ENCODE measurements at regions of chr19 and their contacts with region 1.

Region 1: GRCh38 chr19:49676690-49677231 is 310 bp upstream of the PRMT1 start:
- DNase-seq: peak; percentile 100
- H3K4me3 ChIP-seq: peak overlapping the region; percentile 100
- H3K4me3 Mint-ChIP-seq: peak overlapping the region; percentile 78
- H3K27ac Mint-ChIP-seq: peak overlapping the region; percentile 99
- H3K4me1 ChIP-seq: peaks cover 22% of the 10 kb centered on the region
- H3K4me1 Mint-ChIP-seq: peaks cover 19% of the 10 kb centered on the region
- H3K27me3 ChIP-seq: no peaks in the 10 kb centered on the region
- H3K27me3 Mint-ChIP-seq: no peaks in the 10 kb centered on the region
- CTCF ChIP-seq: no peak

Region 2: GRCh38 chr19:49502866-49503581 is 173.7 kb before region 1 on chr19:
- CTCF ChIA-PET with region 1: interaction called, 3 read pairs
- POLR2A ChIA-PET with region 1: no interaction called
- intact Hi-C with region 1: loop called (anchors 1 kb)
- DNase-seq: peak; percentile 69 to 73
- H3K4me3 ChIP-seq: no peak overlapping the region
- H3K4me3 Mint-ChIP-seq: no peak overlapping the region
- H3K27ac Mint-ChIP-seq: no peak overlapping the region
- H3K4me1 ChIP-seq: peaks cover 5% of the 10 kb centered on the region; the same call in 1 of the 2 replicates
- H3K4me1 Mint-ChIP-seq: peaks cover 7% of the 10 kb centered on the region
- H3K27me3 ChIP-seq: no peaks in the 10 kb centered on the region
- H3K27me3 Mint-ChIP-seq: no peaks in the 10 kb centered on the region
- CTCF ChIP-seq: peak; percentile 65 to 76

Region 3: GRCh38 chr19:49580264-49581006 is 96.3 kb before region 1 on chr19 and contains the start of gene NOSIP:
- CTCF ChIA-PET with region 1: interaction called, 3 read pairs
- POLR2A ChIA-PET with region 1: interaction called, 10 read pairs
- intact Hi-C with region 1: no loop called
- DNase-seq: peak; percentile 97
- H3K4me3 ChIP-seq: peak within 1 kb of the TSS; percentile 99
- H3K4me3 Mint-ChIP-seq: peak within 1 kb of the TSS; percentile 95
- H3K27ac Mint-ChIP-seq: peak within 1 kb of the TSS; percentile 93
- H3K4me1 ChIP-seq: 0 out of 2 replicates have a peak, but pooled peaks cover 4% of the 10 kb centered on the region
- H3K4me1 Mint-ChIP-seq: no peaks in the 10 kb centered on the region
- H3K27me3 ChIP-seq: no peaks in the 10 kb centered on the region
- H3K27me3 Mint-ChIP-seq: no peaks in the 10 kb centered on the region
- CTCF ChIP-seq: no peak
- total RNA-seq, gene NOSIP: 74.7 and 77.7 TPM in 2 replicates

Region 4: GRCh38 chr19:49613374-49613773 is 63.4 kb before region 1 on chr19:
- CTCF ChIA-PET with region 1: no interaction called
- POLR2A ChIA-PET with region 1: no interaction called
- intact Hi-C with region 1: loop called (anchors 2 kb)
- DNase-seq: no peak
- H3K4me3 ChIP-seq: no peak overlapping the region
- H3K4me3 Mint-ChIP-seq: no peak overlapping the region
- H3K27ac Mint-ChIP-seq: no peak overlapping the region
- H3K4me1 ChIP-seq: no peaks in the 10 kb centered on the region
- H3K4me1 Mint-ChIP-seq: no peaks in the 10 kb centered on the region
- H3K27me3 ChIP-seq: no peaks in the 10 kb centered on the region
- H3K27me3 Mint-ChIP-seq: no peaks in the 10 kb centered on the region
- CTCF ChIP-seq: no peak

Region 5: DNA sequence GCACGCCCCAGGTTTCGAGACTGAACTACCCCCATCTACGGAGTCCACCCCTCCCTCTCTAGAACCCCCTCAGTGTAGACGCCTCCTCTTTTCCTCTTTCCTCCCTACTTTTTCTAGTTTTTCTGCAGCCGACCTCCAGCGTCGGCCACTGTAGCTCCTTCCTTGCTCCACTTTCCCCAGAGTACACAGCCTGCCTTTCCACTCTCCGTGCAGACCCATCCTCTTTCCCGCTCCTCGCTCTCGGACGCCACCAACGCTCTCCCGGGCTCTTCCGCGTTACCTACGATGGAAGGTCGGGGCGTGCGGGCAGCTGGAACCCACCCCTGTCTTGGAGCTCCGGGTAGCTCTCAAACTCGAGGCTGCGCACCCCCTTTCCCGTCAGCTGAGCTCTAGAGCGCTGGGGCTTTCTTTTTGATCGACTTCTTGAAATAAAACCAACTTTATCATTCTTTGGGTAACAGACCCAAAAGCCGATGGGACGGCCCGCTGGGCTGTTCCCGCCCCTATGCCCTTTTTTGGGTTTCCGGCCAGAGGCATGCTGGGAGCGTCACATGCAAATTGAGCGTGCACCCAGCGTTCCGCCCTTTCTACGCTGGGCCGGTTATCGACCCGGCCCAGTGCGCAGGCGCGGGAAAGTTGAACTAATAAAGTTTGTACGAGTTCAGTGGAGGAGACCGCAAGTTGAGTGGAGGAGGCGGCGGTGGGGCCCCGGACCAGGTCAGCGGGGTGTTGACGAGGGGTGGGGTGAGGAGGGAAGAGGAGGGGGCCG is 11.2 kb before region 1 on chr19 and contains the starts of genes BCL2L12 and IRF3:
- CTCF ChIA-PET with region 1: interaction called, 14 read pairs
- POLR2A ChIA-PET with region 1: interaction called, 15 read pairs
- intact Hi-C with region 1: loop called (anchors 1 kb)
- DNase-seq: peak; percentile 97 to 98
- H3K4me3 ChIP-seq: peak within 1 kb of the TSS; percentile 86
- H3K4me3 Mint-ChIP-seq: peak within 1 kb of the TSS; percentile 93
- H3K27ac Mint-ChIP-seq: peak within 1 kb of the TSS; percentile 89
- H3K4me1 ChIP-seq: peaks cover 13% of the 10 kb centered on the region; the same call in 1 of the 2 replicates
- H3K4me1 Mint-ChIP-seq: peaks cover 18% of the 10 kb centered on the region
- H3K27me3 ChIP-seq: no peaks in the 10 kb centered on the region
- H3K27me3 Mint-ChIP-seq: no peaks in the 10 kb centered on the region
- CTCF ChIP-seq: no peak
- total RNA-seq, gene BCL2L12: 103 and 111 TPM in 2 replicates
- total RNA-seq, gene IRF3: 125 and 131 TPM in 2 replicates

Region 6: GRCh38 chr19:49869441-49870176 is 192.8 kb after region 1 on chr19:
- CTCF ChIA-PET with region 1: interaction called, 3 read pairs
- POLR2A ChIA-PET with region 1: no interaction called
- intact Hi-C with region 1: loop called (anchors 5 kb)
- DNase-seq: peak; percentile 98
- H3K4me3 ChIP-seq: peak overlapping the region; percentile 69
- H3K4me3 Mint-ChIP-seq: no peak overlapping the region
- H3K27ac Mint-ChIP-seq: no peak overlapping the region
- H3K4me1 ChIP-seq: peaks cover 22% of the 10 kb centered on the region
- H3K4me1 Mint-ChIP-seq: peaks cover 21% of the 10 kb centered on the region
- H3K27me3 ChIP-seq: no peaks in the 10 kb centered on the region
- H3K27me3 Mint-ChIP-seq: no peaks in the 10 kb centered on the region
- CTCF ChIP-seq: peak in 1 of 2 experiments; percentile 19

Measured in Caco-2 (cell line).